Psoas muscle (tissue), 8 donors: ENCODE measurements at regions of chr10 and their contacts with region 1.

Region 1: DNA sequence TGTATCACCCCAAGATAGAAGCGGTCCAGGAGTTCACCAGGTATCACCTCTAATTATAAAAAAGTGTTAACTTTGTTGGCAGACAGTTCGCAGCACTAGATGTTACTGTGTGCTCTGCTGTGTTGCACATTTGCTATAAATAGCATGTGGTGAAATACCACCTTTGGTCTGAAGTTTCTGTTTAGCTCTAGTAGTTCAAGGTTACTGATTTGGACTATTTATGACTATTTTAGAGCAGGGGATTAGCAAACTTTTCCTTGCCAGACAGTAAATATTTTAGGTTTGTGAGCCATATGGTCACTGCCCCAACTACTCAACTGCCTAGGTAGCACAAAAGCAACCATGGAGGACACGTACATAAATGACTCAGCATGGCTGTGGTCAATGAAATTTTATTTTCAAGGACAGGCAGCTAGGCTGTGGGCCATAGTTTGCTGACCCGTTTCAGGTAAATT is 16.5 kb downstream of the DENND10 start:
- DNase-seq: no peak
- ATAC-seq: peak; percentile 89 to 94 (median 92)
- H3K4me3 ChIP-seq: no peak overlapping the region
- H3K27ac ChIP-seq: peak overlapping the region; percentile 83
- H3K4me1 ChIP-seq: peaks cover 14% of the 10 kb centered on the region
- H3K27me3 ChIP-seq: no peaks in the 10 kb centered on the region
- CTCF ChIP-seq: no peak

Region 2: GRCh38 chr10:118698421-118698820 is 422.0 kb before region 1 on chr10:
- intact Hi-C with region 1: no loop called
- DNase-seq: no peak
- ATAC-seq: no peak
- H3K4me3 ChIP-seq: no peak overlapping the region
- H3K27ac ChIP-seq: no peak overlapping the region
- H3K4me1 ChIP-seq: no peaks in the 10 kb centered on the region
- H3K27me3 ChIP-seq: no peaks in the 10 kb centered on the region
- CTCF ChIP-seq: no peak

Region 3: DNA sequence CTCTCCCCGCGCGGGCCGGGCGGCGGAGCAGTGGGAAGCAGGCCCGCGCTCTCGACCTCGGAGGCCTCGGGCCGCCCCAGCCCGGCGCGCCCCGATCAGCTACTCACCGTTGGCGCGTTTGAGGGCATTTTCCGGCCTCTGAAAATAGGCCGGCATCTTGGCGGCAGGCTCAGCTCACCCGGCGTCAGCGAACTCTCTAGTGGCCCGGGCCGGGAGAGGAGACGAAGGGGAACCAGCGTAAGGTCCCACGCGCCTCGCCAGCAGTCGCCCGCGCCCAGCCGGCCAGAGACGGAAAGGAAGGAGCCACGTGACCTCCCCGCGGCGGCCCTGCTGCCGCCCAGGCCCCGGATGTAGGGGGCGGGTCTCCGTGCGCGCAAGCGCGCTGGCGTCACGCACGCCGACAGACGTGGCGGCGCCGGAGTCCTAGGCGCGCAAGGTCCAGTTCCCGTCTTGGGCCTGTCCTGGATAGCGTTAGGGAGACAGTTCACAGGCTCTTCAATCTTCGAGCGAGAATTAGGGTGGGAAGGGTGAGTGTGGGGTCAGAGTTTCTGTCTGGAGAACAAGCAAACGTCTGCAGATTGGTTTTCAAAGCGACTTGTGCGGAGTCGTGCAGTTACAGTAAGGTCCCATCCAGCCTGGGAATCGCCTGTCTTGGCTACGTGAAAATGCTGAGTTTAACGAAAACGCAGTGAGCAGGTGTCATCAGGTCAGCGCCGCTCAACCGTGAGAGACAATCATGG is 39.7 kb before region 1 on chr10 and contains the start of gene EIF3A:
- intact Hi-C with region 1: loop called in 1 of 2 experiments (anchors 5 kb)
- DNase-seq: peak; percentile 92 to 97
- ATAC-seq: peak; percentile 96 to 97 (median 96)
- H3K4me3 ChIP-seq: peak within 1 kb of the TSS; percentile 82
- H3K27ac ChIP-seq: peak within 1 kb of the TSS; percentile 94
- H3K4me1 ChIP-seq: peaks cover 26% of the 10 kb centered on the region
- H3K27me3 ChIP-seq: no peaks in the 10 kb centered on the region
- CTCF ChIP-seq: no peak
- total RNA-seq, gene EIF3A: 148 to 226 (median 190) TPM